ENCODE measurements at regions of chr6 and their contacts with region 1.

Region 1: GRCh38 chr6:97621111-97621510 is 338.1 kb upstream of the MMS22L start:
- DNase-seq: no peak
- H3K4me3 ChIP-seq: no peak overlapping the region
- H3K27ac ChIP-seq: no peak overlapping the region
- H3K4me1 ChIP-seq: no peaks in the 10 kb centered on the region
- H3K27me3 ChIP-seq: no peaks in the 10 kb centered on the region
- CTCF ChIP-seq: no peak

Region 2: DNA sequence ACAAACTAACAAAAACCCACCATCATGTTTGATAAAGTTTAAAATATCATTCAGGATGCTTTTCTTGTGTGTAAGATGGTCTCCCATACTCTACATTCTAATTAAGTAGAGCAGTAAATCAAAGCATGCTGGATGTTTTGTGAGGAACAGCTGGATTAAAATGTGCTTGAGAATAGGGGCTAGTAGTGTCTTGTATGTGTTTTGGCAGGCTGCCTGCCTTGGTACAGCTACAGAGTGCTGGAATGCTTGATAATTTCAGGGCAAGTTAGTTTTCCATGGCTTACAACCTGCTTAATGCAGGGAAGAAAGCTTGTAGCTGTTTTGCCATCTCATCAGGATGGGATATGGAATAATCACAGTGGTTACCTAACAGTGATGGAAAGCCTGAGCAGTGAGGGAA is 298.5 kb after region 1 on chr6:
- CTCF ChIA-PET with region 1: no interaction called
- POLR2A ChIA-PET with region 1: interaction called, 13 read pairs
- intact Hi-C with region 1: no loop called
- DNase-seq: no peak
- H3K4me3 ChIP-seq: no peak overlapping the region
- H3K27ac ChIP-seq: no peak overlapping the region
- H3K4me1 ChIP-seq: no peaks in the 10 kb centered on the region
- H3K27me3 ChIP-seq: no peaks in the 10 kb centered on the region
- CTCF ChIP-seq: no peak

Measured in PC-9 (cell line).